Activated naive CD4-positive, alpha-beta T cell treated with anti-CD3 and anti-CD28 coated beads, Interleukin-2, amount 10 ng/mL, durations not matched to agents 7 days and 5 days (primary cell): ENCODE measurements at regions of chr2 and their contacts with region 1.

Region 1: GRCh38 chr2:53767405-53768241 is at the start of gene CHAC2:
- DNase-seq: peak; percentile 90
- H3K4me3 Mint-ChIP-seq: peak within 1 kb of the TSS; percentile 92
- H3K27ac Mint-ChIP-seq: peak within 1 kb of the TSS; percentile 95
- H3K4me1 Mint-ChIP-seq: peaks cover 39% of the 10 kb centered on the region
- H3K27me3 Mint-ChIP-seq: no peaks in the 10 kb centered on the region

Region 2: DNA sequence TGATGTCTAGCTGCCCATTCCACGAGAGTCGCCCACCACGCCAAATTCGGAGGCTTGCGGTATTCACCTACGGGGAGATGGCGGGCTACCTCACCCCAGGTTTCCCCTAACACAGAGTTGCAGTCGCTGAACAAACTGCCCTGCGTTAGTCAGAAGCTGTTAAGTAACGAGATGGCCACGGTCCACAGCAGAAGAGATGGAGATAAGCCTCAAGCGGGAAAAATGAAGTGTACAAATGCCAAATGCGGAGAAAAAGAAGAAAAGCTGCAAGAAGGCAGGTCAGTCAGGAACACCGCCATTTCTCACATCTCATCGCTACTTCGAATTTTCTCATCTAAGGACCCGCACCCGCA is 18.7 kb after region 1 on chr2:
- CTCF ChIA-PET with region 1: interaction called, 10 read pairs
- DNase-seq: peak; percentile 48
- H3K4me3 Mint-ChIP-seq: peak overlapping the region; percentile 96
- H3K27ac Mint-ChIP-seq: peak overlapping the region; percentile 92
- H3K4me1 Mint-ChIP-seq: peaks cover 49% of the 10 kb centered on the region
- H3K27me3 Mint-ChIP-seq: no peaks in the 10 kb centered on the region